ENCODE measurements at regions of chr9 and their contacts with region 1.

Region 1: GRCh38 chr9:133335878-133336811 is at the start of gene SURF6:
- DNase-seq: peak; percentile 85 to 97
- H3K4me3 ChIP-seq: peak within 1 kb of the TSS; percentile 82
- CTCF ChIP-seq: no peak
- POLR2A ChIP-seq: no peak
- total RNA-seq, gene SURF6: 21.7 to 37.4 (median 27.4) TPM

Region 2: GRCh38 chr9:133184962-133185361 is 151.2 kb before region 1 on chr9:
- intact Hi-C with region 1: loop called (anchors 10 kb)
- DNase-seq: peak in 1 of 2 donors; percentile 35
- H3K4me3 ChIP-seq: no peak overlapping the region
- CTCF ChIP-seq: no peak
- POLR2A ChIP-seq: no peak